Cardiac septum (tissue), 1 donor: ENCODE measurements at regions of chr6 and their contacts with region 1.

Region 1: GRCh38 chr6:5214570-5215052 is 46.1 kb downstream of the LYRM4 start:
- DNase-seq: no peak

Region 2: DNA sequence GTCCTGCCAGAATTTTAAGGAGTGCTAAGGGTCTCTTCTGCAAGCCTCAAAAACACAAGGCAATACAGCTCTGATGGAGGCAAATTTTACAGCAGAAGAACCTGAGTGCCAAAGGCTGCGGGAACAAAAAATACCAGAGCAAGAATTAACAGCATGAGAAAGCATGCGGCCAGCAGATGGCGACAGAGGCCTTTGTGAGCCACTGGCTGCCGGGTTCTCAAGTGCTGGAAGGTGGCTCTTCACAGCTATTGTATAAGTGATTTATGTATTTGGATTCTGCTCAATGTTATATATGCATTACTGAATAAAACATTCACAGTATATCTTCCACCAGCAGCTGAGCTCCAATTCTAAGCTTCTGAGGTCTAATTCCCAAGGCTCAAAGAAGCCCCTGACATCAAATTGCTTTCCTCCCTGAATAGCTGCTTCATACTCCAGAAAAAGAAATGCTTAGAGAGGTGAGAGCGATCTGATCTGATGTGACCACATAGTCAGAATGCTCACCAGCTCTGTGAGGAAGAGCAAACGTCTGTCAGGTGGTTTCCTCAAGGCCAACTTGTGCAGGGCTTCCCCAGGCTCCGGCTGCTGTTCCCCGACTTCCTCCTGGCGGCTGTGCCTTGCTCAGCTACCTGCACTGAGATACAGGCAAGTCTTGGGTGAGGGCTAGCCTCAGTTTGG is 70.8 kb before region 1 on chr6:
- intact Hi-C with region 1: loop called (anchors 5 kb)
- DNase-seq: peak; percentile 89

Region 3: GRCh38 chr6:5260661-5261544 is 46.3 kb after region 1 on chr6 and contains the starts of genes FARS2 and LYRM4:
- intact Hi-C with region 1: loop called (anchors 2 kb)
- DNase-seq: peak; percentile 96
- total RNA-seq, gene FARS2: 13.3 TPM
- total RNA-seq, gene LYRM4: 21.1 TPM

Region 4: GRCh38 chr6:5302995-5303622 is 88.5 kb after region 1 on chr6:
- intact Hi-C with region 1: loop called (anchors 1 kb)
- DNase-seq: no peak

Region 5: GRCh38 chr6:5379647-5380242 is 165.1 kb after region 1 on chr6:
- intact Hi-C with region 1: no loop called
- DNase-seq: no peak

Region 6: GRCh38 chr6:5401845-5402738 is 187.5 kb after region 1 on chr6:
- intact Hi-C with region 1: loop called (anchors 10 kb)
- DNase-seq: no peak